ENCODE measurements at regions of chr14 and their contacts with region 1.

Region 1: DNA sequence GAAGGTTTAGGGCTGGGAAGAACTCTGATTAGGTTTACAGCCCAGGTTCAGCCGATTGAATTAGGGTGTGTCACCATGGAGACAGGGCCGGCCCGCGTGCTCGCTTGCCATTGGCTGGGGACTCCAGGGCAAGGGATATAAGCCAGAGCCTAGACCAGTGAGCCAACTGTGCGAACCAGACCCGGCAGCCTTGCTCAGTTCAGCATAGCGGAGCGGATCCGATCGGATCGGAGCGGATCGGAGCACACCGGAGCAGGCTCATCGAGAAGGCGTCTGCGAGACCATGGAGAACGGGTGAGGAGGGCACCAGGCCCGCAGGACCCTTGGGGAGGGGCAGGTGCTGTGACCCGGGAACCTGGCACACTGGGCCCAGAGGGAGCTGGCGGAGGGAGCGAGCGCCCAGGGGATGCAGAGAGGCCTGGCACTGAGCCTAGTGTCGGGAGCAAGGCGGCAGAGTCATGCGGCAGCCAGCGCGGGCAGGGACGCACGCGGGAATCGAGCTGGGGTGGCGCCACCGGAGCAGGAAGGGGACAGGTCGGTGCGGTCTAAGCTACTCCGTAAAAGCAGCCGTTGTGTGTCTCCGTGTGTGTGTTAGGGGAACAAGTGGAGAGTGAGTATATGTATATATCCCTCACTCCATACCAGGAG is at the start of gene PNP:
- DNase-seq: peak; percentile 72 to 94 (median 85)
- ATAC-seq: peak; percentile 91 to 93
- H3K4me3 Mint-ChIP-seq: peak within 1 kb of the TSS; percentile 96 to 100 (median 100)
- H3K27ac Mint-ChIP-seq: peak within 1 kb of the TSS; percentile 89 to 100 (median 98)
- H3K4me1 Mint-ChIP-seq: peaks cover 32 to 52% (median 48%) of the 10 kb centered on the region in 4 donors
- H3K27me3 Mint-ChIP-seq: no peaks in the 10 kb centered on the region
- polyA plus RNA-seq, gene PNP: 32.2 to 57.9 (median 40.6) TPM

Region 2: GRCh38 chr14:20048202-20048601 is 421.2 kb before region 1 on chr14:
- POLR2A ChIA-PET with region 1: no interaction called
- DNase-seq: no peak
- ATAC-seq: no peak
- H3K4me3 Mint-ChIP-seq: no peak overlapping the region
- H3K27ac Mint-ChIP-seq: no peak overlapping the region
- H3K4me1 Mint-ChIP-seq: no peaks in the 10 kb centered on the region
- H3K27me3 Mint-ChIP-seq: peaks cover 4 to 36% (median 5%) of the 10 kb centered on the region in 5 donors

Region 3: GRCh38 chr14:20482382-20482781 is 13.0 kb after region 1 on chr14:
- POLR2A ChIA-PET with region 1: interaction called, 29 read pairs
- DNase-seq: no peak
- ATAC-seq: no peak
- H3K4me3 Mint-ChIP-seq: peak overlapping the region in 1 of 10 donors; percentile 3
- H3K27ac Mint-ChIP-seq: peak overlapping the region in 9 of 10 donors; percentile 43 to 92 (median 85)
- H3K4me1 Mint-ChIP-seq: peaks cover 40 to 82% (median 76%) of the 10 kb centered on the region in 4 donors
- H3K27me3 Mint-ChIP-seq: no peaks in the 10 kb centered on the region

Region 4: GRCh38 chr14:20489093-20489994 is 20.0 kb after region 1 on chr14:
- POLR2A ChIA-PET with region 1: interaction called, 23 read pairs
- DNase-seq: peak in 4 of 10 donors; percentile 17 to 45 (median 28)
- ATAC-seq: peak; percentile 79 to 89
- H3K4me3 Mint-ChIP-seq: peak overlapping the region; percentile 36 to 84 (median 76)
- H3K27ac Mint-ChIP-seq: peak overlapping the region; percentile 47 to 95 (median 86)
- H3K4me1 Mint-ChIP-seq: peaks cover 42 to 86% (median 72%) of the 10 kb centered on the region in 4 donors
- H3K27me3 Mint-ChIP-seq: no peaks in the 10 kb centered on the region

Measured in naive thymus-derived CD8-positive, alpha-beta T cell (primary cell).